ENCODE measurements at regions of chr18 and their contacts with region 1.

Region 1: GRCh38 chr18:48951448-48952286 is 902 bp upstream of the SMAD7 start:
- DNase-seq: peak; percentile 96
- ATAC-seq: peak; percentile 81

Region 2: GRCh38 chr18:48680339-48681221 is 271.1 kb before region 1 on chr18:
- intact Hi-C with region 1: loop called (anchors 2 kb)
- DNase-seq: peak; percentile 85
- ATAC-seq: peak; percentile 83

Region 3: GRCh38 chr18:48777026-48777743 is 174.5 kb before region 1 on chr18:
- intact Hi-C with region 1: loop called (anchors 2 kb)
- DNase-seq: no peak
- ATAC-seq: no peak

Region 4: DNA sequence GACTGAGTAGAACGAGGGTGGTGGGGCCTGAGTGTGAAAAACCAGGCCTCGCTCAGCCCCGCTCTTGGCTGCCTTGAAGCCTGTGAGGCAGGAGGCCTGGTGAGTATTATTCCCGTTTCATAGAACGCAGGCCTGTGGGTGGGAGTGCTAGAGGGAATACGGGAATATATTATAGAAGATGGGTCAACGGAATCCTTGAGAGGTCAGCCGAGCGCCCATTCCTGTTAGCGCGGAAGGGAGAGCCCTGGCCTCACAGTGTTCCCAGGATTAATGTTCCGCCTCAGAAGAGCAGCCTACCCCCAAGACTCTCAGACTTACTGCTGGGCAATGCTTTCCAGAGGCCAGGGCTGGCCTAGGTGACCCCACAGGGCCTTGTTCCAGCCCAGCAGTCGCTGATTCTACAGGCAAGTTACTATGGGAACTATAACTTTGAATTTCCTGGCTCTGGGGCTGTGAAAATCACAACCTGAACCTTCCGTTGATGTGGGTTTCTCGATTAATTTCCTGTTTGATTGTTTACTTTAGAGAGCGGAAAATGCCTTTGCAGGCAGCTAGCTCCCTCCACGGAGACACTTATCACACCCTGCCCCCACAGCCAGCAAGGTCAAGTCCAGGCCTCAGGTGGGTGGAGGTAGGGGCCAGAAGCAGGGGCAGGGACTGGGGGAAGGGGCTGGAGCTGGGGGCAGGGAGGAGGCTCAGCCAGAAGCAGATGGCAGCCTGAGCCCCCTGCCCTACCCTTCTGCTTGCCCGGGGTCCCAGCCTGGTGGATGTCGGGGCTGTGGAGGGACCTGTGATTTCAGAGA is 109.2 kb before region 1 on chr18:
- intact Hi-C with region 1: loop called (anchors 5 kb)
- DNase-seq: no peak
- ATAC-seq: peak; percentile 40

Region 5: DNA sequence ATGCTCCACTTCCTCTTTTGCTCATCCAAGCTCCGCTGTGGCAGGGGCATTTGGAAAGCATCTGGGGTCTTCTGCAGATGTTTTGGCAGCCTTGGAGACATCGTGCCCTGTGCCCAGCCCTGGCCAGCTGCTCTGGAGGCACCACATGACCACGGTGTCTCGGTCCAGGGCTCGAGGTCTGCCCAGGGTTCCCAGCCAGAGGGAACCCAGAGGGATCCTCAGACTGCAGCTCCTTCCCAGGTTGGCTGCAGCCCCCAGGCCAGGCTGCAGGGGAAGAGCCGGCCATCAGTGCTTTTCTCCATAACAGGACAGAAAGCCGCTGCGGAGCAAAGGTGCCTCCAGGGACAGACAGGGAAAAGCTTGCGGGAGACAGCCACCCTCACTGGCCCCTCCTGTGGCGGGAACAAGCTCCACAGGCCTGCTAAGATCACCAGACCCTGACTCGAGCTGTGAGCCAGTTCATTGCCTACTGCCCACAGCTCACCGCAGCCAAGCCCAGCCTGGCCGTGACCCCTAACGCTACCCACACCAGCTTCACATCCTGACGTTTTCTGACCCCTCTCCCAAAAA is 75.6 kb before region 1 on chr18:
- intact Hi-C with region 1: no loop called
- DNase-seq: no peak
- ATAC-seq: no peak

Region 6: GRCh38 chr18:48975649-48976204 is 24.1 kb after region 1 on chr18:
- intact Hi-C with region 1: loop called (anchors 2 kb)
- DNase-seq: no peak
- ATAC-seq: peak; percentile 76

Region 7: GRCh38 chr18:49041435-49042245 is 90.0 kb after region 1 on chr18:
- intact Hi-C with region 1: loop called (anchors 2 kb)
- DNase-seq: no peak
- ATAC-seq: peak; percentile 75

Region 8: GRCh38 chr18:49178736-49179135 is 227.1 kb after region 1 on chr18:
- intact Hi-C with region 1: loop called (anchors 5 kb)
- DNase-seq: no peak
- ATAC-seq: no peak

Region 9: GRCh38 chr18:49189772-49190171 is 238.1 kb after region 1 on chr18:
- intact Hi-C with region 1: no loop called
- DNase-seq: no peak
- ATAC-seq: no peak